HCT116 (cell line): ENCODE measurements at regions of chrX and their contacts with region 1.

Region 1: DNA sequence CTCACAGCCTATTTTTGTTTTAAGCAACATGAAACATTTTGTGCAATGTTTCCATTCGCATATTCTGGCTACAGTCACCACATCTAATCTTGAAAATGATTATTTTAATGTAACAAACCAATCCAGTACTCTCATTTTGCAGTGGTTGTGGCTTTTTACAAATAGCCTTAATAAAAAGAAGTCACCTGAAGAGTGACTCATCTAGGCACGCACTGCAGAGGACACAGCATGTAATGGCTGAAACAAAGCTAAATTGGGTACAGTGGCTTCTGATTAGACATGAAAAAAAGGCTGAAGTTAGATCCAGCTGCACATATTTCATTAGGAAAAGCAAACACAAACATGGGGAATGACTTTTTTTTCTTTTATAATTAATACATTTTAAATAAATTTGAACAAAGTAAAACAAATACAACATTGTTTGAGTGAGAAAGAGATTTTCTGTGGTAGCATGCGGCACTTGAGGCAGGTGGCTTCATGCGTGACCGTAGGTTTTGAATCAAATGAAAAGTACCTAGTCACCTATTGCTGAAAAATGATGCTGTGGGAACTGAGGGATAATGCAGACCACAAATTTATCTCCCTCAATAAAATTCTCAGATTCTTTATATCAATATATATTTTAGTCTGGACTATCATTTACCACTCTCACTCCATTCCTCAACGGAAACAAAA is 240.8 kb upstream of the DDX53 start:
- DNase-seq: no peak
- ATAC-seq: no peak
- H3K4me3 ChIP-seq: no peak overlapping the region
- H3K27ac ChIP-seq: no peak overlapping the region
- H3K4me1 ChIP-seq: no peaks in the 10 kb centered on the region
- H3K27me3 ChIP-seq: no peaks in the 10 kb centered on the region
- CTCF ChIP-seq: no peak
- POLR2A ChIP-seq: no peak
- RAD21 ChIP-seq: no peak

Region 2: DNA sequence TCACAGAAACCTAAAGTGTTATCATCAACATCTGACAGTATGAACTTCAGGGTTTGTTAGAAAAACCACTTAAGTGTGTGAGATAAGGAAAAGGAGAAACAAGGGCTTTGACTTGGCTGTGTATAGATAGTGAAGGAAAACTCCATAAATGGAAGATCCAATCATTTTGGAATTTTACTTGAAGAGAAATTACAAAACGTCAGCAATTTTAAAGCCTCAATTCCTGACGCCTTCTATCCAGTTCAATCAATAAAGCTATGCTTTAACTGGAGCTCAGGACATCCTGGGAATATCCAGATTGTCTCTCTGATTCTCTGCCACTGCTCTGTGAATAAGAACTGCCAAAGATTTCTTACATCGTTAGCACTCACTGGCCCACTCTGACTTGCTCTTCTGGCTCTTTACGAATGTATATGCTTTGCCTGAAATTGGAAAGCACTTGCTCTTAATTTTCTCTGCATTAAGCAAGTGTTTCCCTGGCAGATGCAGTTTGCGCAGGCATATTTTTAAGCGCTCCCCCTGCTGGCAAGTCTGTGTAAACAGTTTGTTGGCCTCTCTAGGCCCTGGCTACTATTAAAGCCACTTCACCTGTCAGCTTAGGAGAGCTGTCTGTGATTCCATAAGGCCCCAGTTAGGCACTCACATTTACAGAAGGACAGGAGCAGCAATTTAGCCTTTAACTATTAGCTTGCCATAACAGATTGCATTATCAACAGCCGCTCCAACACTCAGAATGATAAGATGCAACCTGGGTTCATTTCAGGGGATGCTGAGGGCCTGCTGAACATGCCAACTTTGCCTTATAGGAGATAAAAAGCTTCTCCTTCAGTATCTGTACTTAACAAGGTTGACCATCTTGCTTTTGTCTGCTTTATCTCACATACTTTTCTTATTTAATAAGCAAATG is 10.6 kb before region 1 on chrX:
- CTCF ChIA-PET with region 1: interaction called, 15 read pairs
- POLR2A ChIA-PET with region 1: no interaction called
- RAD21 ChIA-PET with region 1: no interaction called
- intact Hi-C with region 1: no loop called
- DNase-seq: peak; percentile 19
- ATAC-seq: peak; percentile 82
- H3K4me3 ChIP-seq: no peak overlapping the region
- H3K27ac ChIP-seq: no peak overlapping the region
- H3K4me1 ChIP-seq: no peaks in the 10 kb centered on the region
- H3K27me3 ChIP-seq: no peaks in the 10 kb centered on the region
- CTCF ChIP-seq: peak; percentile 31 to 61 (median 49); a peak in 5 of 6 replicates
- POLR2A ChIP-seq: no peak
- RAD21 ChIP-seq: peak; percentile 60